ENCODE measurements at regions of chr17 and their contacts with region 1.

Region 1: GRCh38 chr17:4074831-4075495 is 67.9 kb downstream of the ZZEF1 start:
- DNase-seq: peak; percentile 34 to 62 (median 54)
- ATAC-seq: peak; percentile 71
- H3K4me3 ChIP-seq: no peak overlapping the region
- H3K27ac ChIP-seq: no peak overlapping the region
- H3K4me1 ChIP-seq: no peaks in the 10 kb centered on the region
- H3K27me3 ChIP-seq: no peaks in the 10 kb centered on the region
- CTCF ChIP-seq: peak; percentile 55 to 72 (median 69)
- EP300 ChIP-seq: no peak
- POLR2A ChIP-seq: no peak
- RAD21 ChIP-seq: peak; percentile 43 to 70

Region 2: GRCh38 chr17:3738562-3739295 is 336.2 kb before region 1 on chr17:
- CTCF ChIA-PET with region 1: no interaction called
- POLR2A ChIA-PET with region 1: no interaction called
- in situ Hi-C with region 1: no loop called
- intact Hi-C with region 1: loop called (anchors 10 kb)
- DNase-seq: peak in 3 of 4 experiments; percentile 28 to 39 (median 33)
- ATAC-seq: peak; percentile 69
- H3K4me3 ChIP-seq: no peak overlapping the region
- H3K27ac ChIP-seq: no peak overlapping the region
- H3K4me1 ChIP-seq: peaks cover 4 to 10% of the 10 kb centered on the region in 2 experiments; a peak in 2 of 5 replicates
- H3K27me3 ChIP-seq: peaks cover 0 to 6% of the 10 kb centered on the region in 2 experiments; a peak in 2 of 5 replicates
- CTCF ChIP-seq: no peak
- EP300 ChIP-seq: no peak
- POLR2A ChIP-seq: no peak
- RAD21 ChIP-seq: no peak

Region 3: DNA sequence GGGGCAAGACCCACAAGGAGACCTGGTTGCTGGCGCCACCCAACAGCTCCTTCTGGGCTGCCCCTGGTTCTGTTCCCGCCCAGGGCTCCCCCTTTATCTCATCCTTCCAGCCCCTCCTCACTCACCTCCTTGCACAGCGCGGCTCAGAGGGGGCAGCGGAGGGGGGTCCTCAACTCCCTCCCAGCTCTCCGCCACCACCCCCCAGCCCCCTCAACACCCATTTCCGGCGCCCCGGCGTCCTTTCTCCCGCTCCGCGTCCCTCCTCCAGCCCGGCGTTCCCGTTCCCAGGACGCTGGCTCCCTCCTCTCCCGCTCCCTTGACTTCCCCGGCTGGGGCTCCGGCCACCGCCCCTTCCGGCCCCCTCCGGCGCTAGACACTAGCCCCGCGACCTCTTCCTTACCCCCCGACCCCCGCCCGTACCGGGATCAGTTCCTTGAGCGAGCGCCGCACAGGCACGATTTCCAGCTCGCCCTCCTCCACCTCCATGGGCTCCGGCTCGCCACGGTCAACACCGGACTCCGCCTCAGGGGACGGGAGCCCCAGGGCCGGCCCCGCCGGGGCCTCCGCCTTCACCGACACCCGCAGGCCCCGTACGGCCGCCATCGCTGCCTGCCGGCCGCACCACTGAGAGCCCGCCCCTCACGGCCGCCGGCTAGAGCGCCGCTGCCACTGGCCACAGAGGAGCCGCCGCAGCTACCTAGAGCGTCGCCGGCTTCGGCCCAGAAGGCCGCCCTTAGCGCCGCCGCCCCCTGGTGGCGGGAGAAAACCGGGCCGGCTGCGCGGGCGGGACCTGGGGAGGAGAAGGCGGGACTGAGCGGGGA is 229.1 kb before region 1 on chr17 and contains the start of gene NCBP3:
- CTCF ChIA-PET with region 1: no interaction called
- POLR2A ChIA-PET with region 1: no interaction called
- in situ Hi-C with region 1: no loop called
- intact Hi-C with region 1: loop called (anchors 10 kb)
- DNase-seq: peak; percentile 90 to 92 (median 92)
- ATAC-seq: peak; percentile 97
- H3K4me3 ChIP-seq: peak within 1 kb of the TSS; percentile 99
- H3K27ac ChIP-seq: peak within 1 kb of the TSS; percentile 83
- H3K4me1 ChIP-seq: peaks cover 2 to 8% of the 10 kb centered on the region in 2 experiments; a peak in 4 of 5 replicates
- H3K27me3 ChIP-seq: 0 out of 5 replicates have a peak, but pooled peaks cover 0 to 2% of the 10 kb centered on the region in 2 experiments
- CTCF ChIP-seq: peak; percentile 79 to 89 (median 86)
- EP300 ChIP-seq: peak; percentile 51; the same call in 1 of the 2 replicates
- POLR2A ChIP-seq: peak; percentile 89
- RAD21 ChIP-seq: no peak
- polyA plus RNA-seq, gene NCBP3: 3.1 to 5.8 TPM

Region 4: GRCh38 chr17:3879186-3879585 is 195.8 kb before region 1 on chr17:
- CTCF ChIA-PET with region 1: no interaction called
- POLR2A ChIA-PET with region 1: no interaction called
- in situ Hi-C with region 1: no loop called
- intact Hi-C with region 1: no loop called
- DNase-seq: no peak
- ATAC-seq: no peak
- H3K4me3 ChIP-seq: no peak overlapping the region
- H3K27ac ChIP-seq: no peak overlapping the region
- H3K4me1 ChIP-seq: no peaks in the 10 kb centered on the region
- H3K27me3 ChIP-seq: no peaks in the 10 kb centered on the region
- CTCF ChIP-seq: no peak
- EP300 ChIP-seq: no peak
- POLR2A ChIP-seq: no peak
- RAD21 ChIP-seq: no peak

Region 5: DNA sequence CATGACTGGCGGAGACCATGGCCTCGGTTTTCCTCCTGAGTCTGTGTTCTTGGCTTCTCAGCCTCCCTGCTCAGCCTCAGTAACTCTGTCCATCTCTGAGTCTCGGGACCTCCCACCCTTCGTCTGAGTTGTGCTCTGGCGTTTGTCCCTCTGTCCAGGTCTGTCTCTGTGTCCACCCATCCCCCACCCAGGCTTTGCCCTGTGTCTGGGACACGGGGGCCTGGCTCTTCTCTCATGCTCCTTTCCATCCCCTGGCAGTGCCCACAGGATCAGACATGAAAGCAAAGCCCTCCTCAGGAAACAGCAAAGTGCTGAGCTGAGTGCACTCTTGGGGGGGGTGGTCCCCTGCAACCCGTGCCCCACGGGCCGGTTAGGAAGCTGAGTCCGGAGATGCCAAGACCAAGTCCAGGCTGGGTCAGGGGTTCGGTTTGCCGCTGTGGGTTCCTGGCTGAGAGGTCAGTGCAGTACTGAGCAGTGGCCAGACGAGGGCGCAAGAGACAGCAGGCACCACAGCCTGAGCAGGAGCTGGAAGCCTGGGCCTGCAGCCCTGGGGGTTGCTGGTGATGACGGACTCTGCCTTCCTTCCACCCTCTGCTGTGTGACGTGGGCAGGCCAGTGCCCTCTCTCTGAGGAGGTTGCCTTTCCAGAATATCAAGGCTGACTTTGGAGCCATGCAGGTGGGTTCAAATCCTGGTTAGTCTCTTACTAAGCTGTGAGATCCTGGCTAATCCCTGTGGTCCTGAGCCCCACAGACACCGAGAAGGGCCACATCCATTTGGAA is 161.2 kb before region 1 on chr17:
- CTCF ChIA-PET with region 1: interaction called, 7 read pairs
- POLR2A ChIA-PET with region 1: no interaction called
- in situ Hi-C with region 1: no loop called
- intact Hi-C with region 1: loop called (anchors 5 kb)
- DNase-seq: peak; percentile 65 to 80 (median 71)
- ATAC-seq: peak; percentile 79
- H3K4me3 ChIP-seq: peak overlapping the region; percentile 55
- H3K27ac ChIP-seq: peak overlapping the region; percentile 81; the same call in 2 of the 3 replicates
- H3K4me1 ChIP-seq: peaks cover 32 to 46% of the 10 kb centered on the region in 2 experiments
- H3K27me3 ChIP-seq: no peaks in the 10 kb centered on the region
- CTCF ChIP-seq: peak; percentile 84 to 92 (median 87)
- EP300 ChIP-seq: no peak
- POLR2A ChIP-seq: no peak
- RAD21 ChIP-seq: peak; percentile 52 to 79; a peak in 3 of 4 replicates

Region 6: DNA sequence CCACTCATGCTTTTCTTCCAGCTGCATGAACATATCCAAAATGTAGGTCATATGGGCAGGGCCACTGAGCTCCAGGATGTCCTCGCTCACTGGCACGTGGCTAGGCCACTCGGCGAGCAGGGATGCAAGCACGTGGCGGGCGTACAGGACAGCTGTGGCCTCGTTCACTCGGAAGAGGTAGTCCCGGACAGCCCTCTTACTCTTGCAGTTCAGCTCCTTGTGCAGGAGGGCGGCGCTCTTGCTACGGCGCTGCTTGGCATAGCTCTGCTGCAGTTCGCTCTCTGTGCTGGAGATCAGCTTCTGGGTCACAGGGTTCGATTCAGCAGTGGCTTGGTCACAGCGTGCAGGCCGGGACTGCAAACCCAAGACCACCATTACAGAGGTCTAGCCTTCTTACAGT is 57.6 kb before region 1 on chr17:
- CTCF ChIA-PET with region 1: no interaction called
- POLR2A ChIA-PET with region 1: interaction called, 3 read pairs
- in situ Hi-C with region 1: no loop called
- intact Hi-C with region 1: loop called (anchors 10 kb)
- DNase-seq: peak; percentile 20 to 29 (median 26)
- ATAC-seq: peak; percentile 83
- H3K4me3 ChIP-seq: no peak overlapping the region
- H3K27ac ChIP-seq: no peak overlapping the region
- H3K4me1 ChIP-seq: no peaks in the 10 kb centered on the region; a peak in 2 of 5 replicates
- H3K27me3 ChIP-seq: no peaks in the 10 kb centered on the region
- CTCF ChIP-seq: peak; percentile 46 to 65 (median 48); a peak in 5 of 6 replicates
- EP300 ChIP-seq: no peak
- POLR2A ChIP-seq: no peak
- RAD21 ChIP-seq: no peak